PC-9 (cell line): ENCODE measurements at regions of chr10 and their contacts with region 1.

Region 1: DNA sequence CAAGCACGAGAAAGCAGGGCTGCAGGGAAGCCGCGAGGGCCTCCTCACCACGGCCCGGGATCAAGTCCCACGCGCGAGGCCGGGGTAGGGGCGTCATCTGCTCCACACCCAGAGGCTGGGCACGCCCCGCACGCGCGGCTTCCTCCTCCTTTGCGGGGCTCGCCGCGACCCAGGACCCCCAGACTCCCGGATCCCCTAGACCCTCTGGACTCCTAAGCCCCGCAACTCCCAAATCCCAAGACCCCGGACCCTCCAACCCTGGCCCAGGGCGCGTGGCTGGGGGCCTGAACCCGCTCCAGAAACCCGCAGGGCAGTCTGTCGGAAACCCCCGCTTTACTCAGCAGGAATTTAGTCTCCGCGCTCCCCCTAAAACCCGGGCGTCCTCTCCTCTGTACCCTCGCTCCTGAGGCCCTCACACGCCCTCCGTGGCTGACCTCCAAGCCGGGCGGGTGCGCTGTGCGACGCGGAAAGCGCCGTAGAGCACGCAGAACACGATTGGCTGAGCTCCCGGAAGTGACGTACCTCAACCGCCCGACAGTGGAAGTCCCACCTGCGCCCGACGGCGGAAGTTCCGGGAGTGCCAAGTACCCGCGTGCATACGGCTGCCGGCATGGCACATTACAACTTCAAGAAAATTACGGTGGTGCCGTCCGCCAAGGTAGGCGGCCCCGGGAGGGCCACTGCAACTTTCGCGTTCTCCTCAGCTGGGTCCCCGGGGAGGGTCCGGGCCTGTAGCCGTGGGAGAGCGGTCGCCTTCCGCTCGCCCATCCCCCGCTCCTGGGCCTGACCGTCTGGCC is at the start of gene GTPBP4:
- DNase-seq: peak; percentile 89 to 91
- H3K4me3 ChIP-seq: peak within 1 kb of the TSS; percentile 91
- H3K27ac ChIP-seq: peak within 1 kb of the TSS; percentile 57
- H3K4me1 ChIP-seq: peaks cover 20% of the 10 kb centered on the region
- H3K27me3 ChIP-seq: no peaks in the 10 kb centered on the region
- CTCF ChIP-seq: no peak
- total RNA-seq, gene GTPBP4: 62.5 and 74.1 TPM in 2 replicates

Region 2: DNA sequence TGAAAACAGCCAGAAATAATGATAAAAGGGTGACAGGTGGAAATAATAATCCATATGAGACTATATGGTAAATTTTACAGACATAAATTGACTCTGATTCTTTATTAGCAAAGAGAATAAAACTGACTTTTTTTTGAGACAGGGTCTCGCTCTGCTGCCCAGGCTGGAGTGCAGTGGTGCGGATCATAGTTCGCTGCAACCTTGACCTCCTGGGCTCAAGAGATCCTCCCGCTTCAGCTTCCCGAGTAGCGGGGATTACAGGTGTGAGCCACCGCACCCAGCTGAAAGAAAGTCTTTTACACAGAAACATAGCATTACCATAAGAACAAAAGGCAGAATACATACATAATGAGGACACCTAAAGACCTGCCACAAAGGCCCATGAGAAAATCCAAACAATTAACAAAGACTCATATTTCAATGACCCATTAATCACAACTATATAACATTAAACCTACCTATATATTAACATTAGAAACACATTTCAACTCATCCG is 247.1 kb before region 1 on chr10:
- CTCF ChIA-PET with region 1: no interaction called
- POLR2A ChIA-PET with region 1: no interaction called
- intact Hi-C with region 1: no loop called
- DNase-seq: no peak
- H3K4me3 ChIP-seq: no peak overlapping the region
- H3K27ac ChIP-seq: no peak overlapping the region
- H3K4me1 ChIP-seq: no peaks in the 10 kb centered on the region
- H3K27me3 ChIP-seq: peaks cover 38% of the 10 kb centered on the region
- CTCF ChIP-seq: no peak

Region 3: GRCh38 chr10:1022413-1022812 is 34.3 kb after region 1 on chr10:
- CTCF ChIA-PET with region 1: no interaction called
- POLR2A ChIA-PET with region 1: no interaction called
- intact Hi-C with region 1: no loop called
- DNase-seq: no peak
- H3K4me3 ChIP-seq: no peak overlapping the region
- H3K27ac ChIP-seq: no peak overlapping the region
- H3K4me1 ChIP-seq: no peaks in the 10 kb centered on the region
- H3K27me3 ChIP-seq: no peaks in the 10 kb centered on the region
- CTCF ChIP-seq: no peak

Region 4: DNA sequence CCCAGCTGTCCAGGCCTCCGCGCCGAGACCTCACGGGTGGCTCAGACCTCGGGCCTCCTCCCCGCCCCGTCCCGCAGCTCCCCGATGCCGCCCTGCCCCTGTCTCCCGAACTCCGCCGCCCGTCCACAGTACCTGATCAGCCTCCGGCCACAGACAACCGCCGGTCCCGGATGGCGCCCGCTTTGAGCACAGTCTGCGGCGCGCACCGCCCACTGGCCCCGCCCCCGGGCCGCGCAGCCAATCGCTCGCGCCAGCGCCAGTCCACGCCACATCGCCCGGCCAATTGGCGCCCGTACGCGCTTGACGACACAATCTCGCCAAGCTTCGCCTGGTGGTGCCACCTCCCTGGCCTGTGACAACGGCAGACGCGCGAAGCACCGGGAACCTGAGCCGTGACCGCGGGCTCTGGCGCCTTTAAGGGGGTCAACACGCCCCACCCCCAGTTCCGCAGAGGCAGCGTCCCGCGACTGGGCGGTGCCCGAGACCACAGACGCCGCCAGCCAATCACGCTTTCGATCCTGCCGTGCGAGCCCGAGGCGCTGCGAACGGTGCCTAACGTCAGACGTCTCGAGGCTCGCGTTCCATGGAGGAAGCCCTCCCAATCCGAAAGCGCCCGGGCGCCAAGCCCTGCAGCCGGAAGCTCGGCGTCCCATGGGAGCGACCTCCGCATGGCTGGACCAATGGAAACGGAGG is 60.8 kb after region 1 on chr10 and contains the start of gene IDI1:
- CTCF ChIA-PET with region 1: no interaction called
- POLR2A ChIA-PET with region 1: interaction called, 3 read pairs
- intact Hi-C with region 1: loop called (anchors 2 kb)
- DNase-seq: peak; percentile 91 to 97
- H3K4me3 ChIP-seq: peak within 1 kb of the TSS; percentile 92
- H3K27ac ChIP-seq: peak within 1 kb of the TSS; percentile 87
- H3K4me1 ChIP-seq: peaks cover 16% of the 10 kb centered on the region
- H3K27me3 ChIP-seq: no peaks in the 10 kb centered on the region
- CTCF ChIP-seq: no peak
- total RNA-seq, gene IDI1: 38.5 and 57.7 TPM in 2 replicates

Region 5: DNA sequence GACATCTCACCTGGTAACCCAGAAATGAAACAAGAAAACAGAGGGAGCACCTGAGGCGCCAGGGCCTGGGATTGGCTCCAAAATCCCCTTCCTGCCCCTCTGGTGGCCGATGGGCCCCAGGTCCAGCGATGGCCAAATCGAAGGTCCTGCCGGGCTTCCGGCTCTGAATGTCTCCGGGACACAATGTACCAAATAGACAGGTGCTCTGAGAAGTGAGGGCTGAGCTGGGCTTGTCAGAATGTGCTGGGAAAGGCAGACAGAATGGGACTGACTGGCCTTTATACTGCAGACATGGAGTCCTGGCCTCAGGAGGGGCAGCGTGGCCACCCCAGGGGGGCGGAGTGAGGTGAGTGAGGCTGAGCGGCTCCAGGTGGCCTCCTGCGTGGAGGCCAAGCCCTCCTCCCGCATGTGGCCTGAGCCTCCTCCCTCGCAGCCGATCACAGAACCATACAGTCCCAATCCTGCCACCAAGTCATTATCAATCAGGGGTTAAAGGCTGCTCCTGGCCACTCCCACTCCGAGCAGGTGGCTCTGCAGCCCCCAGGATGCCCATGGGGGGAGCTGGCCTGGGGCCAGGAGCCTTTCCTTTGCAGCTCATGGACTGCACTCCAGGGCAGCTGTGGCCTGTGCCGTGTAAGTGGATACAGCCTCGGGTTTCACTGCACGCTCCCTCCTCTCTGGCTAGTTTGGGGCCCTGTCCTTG is 563.7 kb after region 1 on chr10:
- CTCF ChIA-PET with region 1: no interaction called
- POLR2A ChIA-PET with region 1: no interaction called
- intact Hi-C with region 1: no loop called
- DNase-seq: no peak
- H3K4me3 ChIP-seq: no peak overlapping the region
- H3K27ac ChIP-seq: no peak overlapping the region
- H3K4me1 ChIP-seq: no peaks in the 10 kb centered on the region
- H3K27me3 ChIP-seq: peaks cover 79% of the 10 kb centered on the region
- CTCF ChIP-seq: no peak